K562 (cell line): ENCODE measurements at regions of chr2 and their contacts with region 1.

Region 1: DNA sequence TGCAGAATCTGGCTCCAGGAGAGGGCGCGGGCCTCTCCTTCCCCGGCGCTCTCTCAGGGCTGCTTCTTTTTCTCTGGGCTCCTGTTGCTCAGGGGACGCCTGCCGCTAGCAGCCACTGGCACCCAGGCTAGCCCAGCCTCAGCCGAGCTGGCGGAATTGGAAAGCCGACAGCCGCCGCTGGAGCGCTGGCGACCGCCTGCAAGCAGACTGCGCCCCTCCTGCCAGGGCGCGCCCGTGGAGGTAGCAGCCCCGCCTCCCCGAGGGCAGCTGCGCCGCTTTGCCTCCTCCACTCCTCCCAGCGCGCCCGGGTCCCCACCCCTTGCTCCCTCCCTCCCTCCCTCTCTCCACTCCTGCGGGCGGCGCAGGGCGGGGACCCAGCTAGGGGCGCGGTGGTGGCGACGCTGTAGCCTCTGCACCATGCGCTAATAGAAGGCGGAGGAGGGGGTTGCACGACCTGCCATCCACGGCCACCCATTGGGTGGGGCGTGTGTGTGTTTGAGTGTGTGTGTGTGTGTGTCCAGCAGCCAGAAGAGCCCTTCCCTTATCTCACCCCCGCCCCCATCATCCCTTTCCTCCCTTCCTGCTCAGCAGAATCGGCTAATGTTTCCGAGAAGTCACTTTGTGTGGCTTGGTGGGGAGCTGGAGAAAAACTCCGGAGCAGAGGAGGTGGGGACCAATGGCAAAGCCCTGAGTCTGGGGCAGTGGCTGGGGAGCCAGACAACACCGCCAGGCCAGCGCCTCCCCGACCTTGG is at the start of gene SCN9A:
- DNase-seq: peak; percentile 90 to 98 (median 93)
- ATAC-seq: peak; percentile 92
- H3K4me3 ChIP-seq: peak within 1 kb of the TSS; percentile 62
- H3K27ac ChIP-seq: peak within 1 kb of the TSS; percentile 83
- H3K4me1 ChIP-seq: peaks cover 4 to 27% of the 10 kb centered on the region in 2 experiments; a peak in 4 of 5 replicates
- H3K27me3 ChIP-seq: no peaks in the 10 kb centered on the region
- CTCF ChIP-seq: peak; percentile 36 to 40 (median 36); a peak in 5 of 6 replicates
- EP300 ChIP-seq: peak; percentile 92
- POLR2A ChIP-seq: peak; percentile 78
- RAD21 ChIP-seq: peak in 1 of 2 experiments; percentile 31; a peak in 2 of 4 replicates
- polyA plus RNA-seq, gene SCN9A: 1.4 to 1.5 TPM

Region 2: DNA sequence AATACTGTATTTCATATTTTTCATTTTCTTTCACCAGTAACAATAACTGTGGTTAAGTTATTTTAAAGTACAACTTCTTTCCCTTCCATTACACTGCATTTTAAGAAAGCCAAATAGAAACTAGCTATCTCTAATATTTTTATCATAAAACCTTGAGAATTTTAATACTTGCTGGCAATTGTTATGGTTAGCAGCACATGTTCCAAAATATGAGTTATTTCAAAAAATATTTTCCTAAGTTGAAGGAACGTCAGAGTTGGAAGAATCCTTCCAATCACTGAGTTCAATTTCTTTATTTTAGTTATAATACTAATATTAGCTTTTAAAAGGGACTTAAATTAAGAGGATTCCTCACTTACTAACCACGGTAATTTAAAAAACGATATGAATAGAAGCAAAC is 68.6 kb before region 1 on chr2:
- CTCF ChIA-PET with region 1: no interaction called
- POLR2A ChIA-PET with region 1: no interaction called
- in situ Hi-C with region 1: no loop called
- intact Hi-C with region 1: no loop called
- DNase-seq: no peak
- ATAC-seq: no peak
- H3K4me3 ChIP-seq: no peak overlapping the region
- H3K27ac ChIP-seq: no peak overlapping the region
- H3K4me1 ChIP-seq: no peaks in the 10 kb centered on the region
- H3K27me3 ChIP-seq: no peaks in the 10 kb centered on the region
- CTCF ChIP-seq: no peak
- EP300 ChIP-seq: no peak
- POLR2A ChIP-seq: no peak
- RAD21 ChIP-seq: no peak

Region 3: GRCh38 chr2:166410828-166411472 is 35.0 kb after region 1 on chr2:
- CTCF ChIA-PET with region 1: no interaction called
- POLR2A ChIA-PET with region 1: interaction called, 3 read pairs
- in situ Hi-C with region 1: no loop called
- intact Hi-C with region 1: loop called (anchors 2 kb)
- DNase-seq: peak in 1 of 4 experiments; percentile 56
- ATAC-seq: peak; percentile 85
- H3K4me3 ChIP-seq: no peak overlapping the region
- H3K27ac ChIP-seq: no peak overlapping the region; the same call in 2 of the 3 replicates
- H3K4me1 ChIP-seq: peaks cover 0 to 8% of the 10 kb centered on the region in 2 experiments; a peak in 3 of 5 replicates
- H3K27me3 ChIP-seq: no peaks in the 10 kb centered on the region
- CTCF ChIP-seq: no peak
- EP300 ChIP-seq: peak; percentile 79
- POLR2A ChIP-seq: no peak
- RAD21 ChIP-seq: no peak; a peak in 1 of 4 replicates